ENCODE measurements at regions of chr10 and their contacts with region 1.

Region 1: GRCh38 chr10:52308251-52309031 is 5.6 kb upstream of the DKK1 start:
- DNase-seq: peak; percentile 88
- H3K4me3 ChIP-seq: no peak overlapping the region; a peak in 2 of 4 replicates
- H3K27ac ChIP-seq: peak overlapping the region in 1 of 2 experiments; percentile 67; a peak in 1 of 4 replicates
- H3K4me1 ChIP-seq: peaks cover 0 to 8% of the 10 kb centered on the region in 2 experiments; a peak in 2 of 4 replicates
- H3K27me3 ChIP-seq: no peaks in the 10 kb centered on the region
- CTCF ChIP-seq: peak; percentile 80
- EP300 ChIP-seq: no peak
- RAD21 ChIP-seq: peak; percentile 97

Region 2: DNA sequence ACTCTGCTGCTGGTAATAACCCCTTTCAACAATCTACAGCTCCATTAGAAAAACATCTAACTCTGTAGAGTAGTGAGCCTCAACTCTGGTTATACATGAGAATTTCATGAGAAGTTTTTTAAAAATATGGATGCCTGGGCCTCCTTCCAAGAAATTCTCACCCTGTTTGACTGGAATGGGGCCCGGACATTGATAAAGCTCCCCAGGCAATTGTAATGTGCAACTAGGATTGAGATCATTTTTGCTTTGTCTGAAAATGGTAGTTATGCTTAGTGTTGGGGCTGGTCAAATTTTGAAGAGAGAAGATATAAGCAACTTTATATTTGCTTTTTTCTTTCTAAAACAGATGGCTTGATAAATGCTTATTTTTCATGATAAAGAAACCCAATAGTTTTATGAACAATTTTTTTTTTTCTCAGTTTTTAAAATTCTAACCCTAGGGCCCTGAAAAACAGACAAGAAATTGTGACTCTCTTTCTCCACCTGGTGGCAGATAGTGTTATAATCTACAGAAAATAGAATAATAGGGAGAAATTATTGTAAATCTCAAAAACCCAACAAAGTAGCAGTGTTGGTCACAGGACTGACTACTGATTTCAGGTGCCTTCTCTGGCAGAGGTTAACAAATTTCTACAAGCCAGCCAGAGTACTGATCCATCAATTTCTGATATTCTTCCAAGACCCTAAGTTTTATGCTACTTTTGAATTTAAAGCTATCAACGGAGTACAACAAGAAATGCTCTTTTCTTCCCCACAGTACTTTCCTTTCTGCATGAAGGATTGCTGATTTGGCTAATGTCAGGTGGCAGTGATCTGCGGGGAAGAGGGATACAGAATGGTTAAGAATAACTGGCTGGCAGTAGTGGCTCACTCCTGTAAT is 180.4 kb after region 1 on chr10:
- CTCF ChIA-PET with region 1: interaction called, 185 read pairs
- POLR2A ChIA-PET with region 1: no interaction called
- DNase-seq: peak; percentile 38
- H3K4me3 ChIP-seq: no peak overlapping the region; a peak in 1 of 4 replicates
- H3K27ac ChIP-seq: peak overlapping the region; percentile 47 to 89; a peak in 3 of 4 replicates
- H3K4me1 ChIP-seq: peaks cover 5 to 14% of the 10 kb centered on the region in 2 experiments; a peak in 3 of 4 replicates
- H3K27me3 ChIP-seq: no peaks in the 10 kb centered on the region
- CTCF ChIP-seq: peak; percentile 75
- EP300 ChIP-seq: no peak
- RAD21 ChIP-seq: peak; percentile 79

Region 3: GRCh38 chr10:52621635-52622079 is 313.2 kb after region 1 on chr10:
- CTCF ChIA-PET with region 1: interaction called, 11 read pairs
- POLR2A ChIA-PET with region 1: no interaction called
- DNase-seq: peak; percentile 42
- H3K4me3 ChIP-seq: no peak overlapping the region; a peak in 1 of 4 replicates
- H3K27ac ChIP-seq: peak overlapping the region; percentile 45 to 99
- H3K4me1 ChIP-seq: peaks cover 27 to 32% of the 10 kb centered on the region in 2 experiments
- H3K27me3 ChIP-seq: no peaks in the 10 kb centered on the region
- CTCF ChIP-seq: no peak
- EP300 ChIP-seq: peak; percentile 30 to 94; a peak in 3 of 4 replicates
- RAD21 ChIP-seq: no peak; the same call in 1 of the 2 replicates

Region 4: GRCh38 chr10:52729271-52730104 is 421.0 kb after region 1 on chr10:
- CTCF ChIA-PET with region 1: interaction called, 27 read pairs
- POLR2A ChIA-PET with region 1: no interaction called
- DNase-seq: peak; percentile 56
- H3K4me3 ChIP-seq: no peak overlapping the region; a peak in 1 of 4 replicates
- H3K27ac ChIP-seq: peak overlapping the region in 1 of 2 experiments; percentile 62; a peak in 1 of 4 replicates
- H3K4me1 ChIP-seq: no peaks in the 10 kb centered on the region; a peak in 2 of 4 replicates
- H3K27me3 ChIP-seq: no peaks in the 10 kb centered on the region
- CTCF ChIP-seq: peak; percentile 77
- EP300 ChIP-seq: no peak
- RAD21 ChIP-seq: peak; percentile 86